Activated naive CD4-positive, alpha-beta T cell treated with anti-CD3 and anti-CD28 coated beads for 36 hours (primary cell): ENCODE measurements at regions of chr19 and their contacts with region 1.

Region 1: GRCh38 chr19:7738023-7738422 is 6.1 kb upstream of the CLEC4G start:
- DNase-seq: peak; percentile 53
- H3K4me3 Mint-ChIP-seq: no peak overlapping the region
- H3K27ac Mint-ChIP-seq: peak overlapping the region; percentile 11
- H3K4me1 Mint-ChIP-seq: peaks cover 14% of the 10 kb centered on the region
- H3K27me3 Mint-ChIP-seq: peaks cover 26% of the 10 kb centered on the region

Region 2: DNA sequence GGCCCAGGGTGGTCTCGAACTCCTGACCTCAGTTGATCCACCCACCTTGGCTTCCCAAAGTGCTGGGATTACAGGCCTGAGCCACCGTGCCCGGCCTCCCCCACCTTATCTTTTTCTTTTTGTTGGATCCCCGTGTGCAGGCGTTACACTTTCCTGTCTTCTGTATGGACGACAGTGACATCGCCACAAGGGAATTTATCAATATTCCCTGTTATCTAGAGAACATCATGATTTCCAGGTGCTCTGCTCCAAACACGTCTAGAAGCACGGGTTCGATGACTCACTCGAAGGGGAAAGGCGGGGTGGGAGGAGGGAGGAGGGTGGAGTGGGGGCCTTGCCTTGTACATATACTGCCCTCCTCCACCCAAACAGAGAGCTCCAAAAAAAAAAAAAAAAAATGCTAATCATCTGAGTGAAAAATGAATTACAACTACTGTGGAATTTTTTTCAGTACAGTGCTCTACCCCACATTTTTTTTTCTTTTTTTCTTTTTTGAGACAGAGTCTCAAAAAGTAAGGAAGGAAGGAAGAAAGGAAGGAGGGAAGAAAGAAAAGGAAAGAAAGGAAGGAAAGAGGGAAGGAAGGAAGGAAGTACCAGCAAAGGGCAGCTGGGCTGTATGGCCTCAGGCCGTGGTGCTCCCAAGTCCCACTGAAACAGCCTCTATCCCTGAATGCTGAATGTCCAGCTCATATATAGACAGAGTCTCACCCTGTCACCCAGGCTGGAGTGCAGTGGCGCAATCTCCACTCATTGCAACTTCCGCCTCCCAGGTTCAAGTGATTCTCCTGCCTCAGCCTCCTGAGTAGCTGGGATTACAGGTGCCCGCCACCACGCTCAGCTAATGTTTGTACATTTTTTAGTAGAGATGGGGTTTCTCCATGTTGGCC is 480.6 kb before region 1 on chr19:
- CTCF ChIA-PET with region 1: no interaction called
- intact Hi-C with region 1: no loop called
- DNase-seq: no peak
- H3K4me3 Mint-ChIP-seq: no peak overlapping the region
- H3K27ac Mint-ChIP-seq: no peak overlapping the region
- H3K4me1 Mint-ChIP-seq: no peaks in the 10 kb centered on the region
- H3K27me3 Mint-ChIP-seq: no peaks in the 10 kb centered on the region

Region 3: DNA sequence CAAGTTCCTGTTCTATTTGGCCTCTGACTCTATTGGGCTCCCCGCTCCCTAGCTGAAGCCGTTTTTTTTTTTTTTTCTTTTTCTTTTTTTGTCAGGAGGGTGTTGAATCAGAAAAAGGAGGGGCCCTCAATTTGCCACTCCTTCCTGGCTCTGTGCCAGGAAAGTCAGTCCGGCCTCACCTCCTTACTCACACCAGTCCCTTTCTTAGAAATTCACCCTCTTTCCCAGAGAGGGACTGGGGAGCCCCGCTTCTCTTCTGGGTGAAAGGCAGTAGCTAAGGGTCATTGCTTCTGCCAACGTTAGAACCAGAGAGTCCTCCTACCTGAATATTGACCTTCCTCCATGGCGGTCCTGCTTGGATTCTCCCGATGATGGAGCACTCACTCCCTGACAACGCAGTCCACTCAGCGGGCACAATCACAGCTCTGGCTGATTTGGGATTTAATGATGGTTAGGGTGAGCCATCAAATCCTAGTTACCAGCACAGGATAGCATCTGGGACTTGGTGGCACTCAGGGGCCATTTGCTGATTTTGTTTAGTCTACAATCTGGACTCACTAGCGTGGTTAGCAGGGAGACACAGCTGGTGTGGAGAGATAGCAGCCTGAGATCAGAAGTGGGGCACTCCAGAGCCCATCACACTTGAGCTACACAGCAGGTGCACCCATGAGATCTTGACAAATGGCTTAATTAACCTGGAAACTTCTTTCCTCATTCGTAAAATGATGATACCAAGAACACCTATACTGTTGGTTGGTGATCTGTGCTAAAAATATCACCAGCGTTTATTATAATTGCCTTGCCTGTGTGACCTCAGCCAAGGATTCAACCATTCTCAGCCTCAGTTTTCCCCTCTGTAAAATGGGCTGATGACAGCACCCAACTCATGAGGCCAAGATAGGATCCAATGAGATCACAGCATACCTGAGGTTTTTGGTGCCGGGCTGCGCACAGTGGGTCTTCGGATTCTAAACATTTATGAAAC is 38.3 kb before region 1 on chr19:
- CTCF ChIA-PET with region 1: no interaction called
- intact Hi-C with region 1: loop called (anchors 1 kb)
- DNase-seq: peak; percentile 77
- H3K4me3 Mint-ChIP-seq: peak overlapping the region; percentile 22
- H3K27ac Mint-ChIP-seq: peak overlapping the region; percentile 66
- H3K4me1 Mint-ChIP-seq: peaks cover 30% of the 10 kb centered on the region
- H3K27me3 Mint-ChIP-seq: peaks cover 8% of the 10 kb centered on the region

Region 4: DNA sequence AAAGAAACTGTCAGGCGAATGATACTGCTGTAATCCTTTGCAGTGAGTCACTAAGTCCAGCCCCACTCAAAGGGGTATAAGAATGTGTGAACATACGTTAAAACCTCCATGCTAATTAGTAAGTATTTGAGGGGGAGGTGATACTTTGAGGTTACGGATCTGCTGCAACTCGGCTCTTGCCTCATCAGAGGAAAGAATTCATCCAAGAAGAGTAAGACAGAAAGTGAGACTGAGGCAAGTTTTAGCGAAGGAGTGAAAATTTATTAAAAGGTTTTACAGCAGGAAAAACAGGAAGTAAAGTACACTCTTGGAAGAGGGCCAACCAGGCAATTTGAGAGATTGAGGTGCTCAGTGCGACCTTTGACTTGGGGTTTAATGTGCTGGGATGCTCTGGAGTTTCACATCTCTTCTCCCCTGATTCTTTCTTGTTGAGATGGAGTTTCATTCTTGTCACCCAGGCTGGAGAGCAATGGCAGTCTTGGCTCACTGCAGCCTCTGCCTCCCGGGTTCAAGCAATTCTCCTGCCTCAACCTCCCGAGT is 34.8 kb after region 1 on chr19:
- CTCF ChIA-PET with region 1: interaction called, 5 read pairs
- intact Hi-C with region 1: loop called (anchors 1 kb)
- DNase-seq: peak; percentile 71
- H3K4me3 Mint-ChIP-seq: no peak overlapping the region
- H3K27ac Mint-ChIP-seq: peak overlapping the region; percentile 77
- H3K4me1 Mint-ChIP-seq: peaks cover 27% of the 10 kb centered on the region
- H3K27me3 Mint-ChIP-seq: peaks cover 4% of the 10 kb centered on the region